Stomach (tissue), 19 donors: ENCODE measurements at regions of chr12 and their contacts with region 1.

Region 1: GRCh38 chr12:54958048-54958658 is 26.4 kb downstream of the TESPA1 start:
- DNase-seq: peak; percentile 42 to 87
- H3K4me3 ChIP-seq: no peak overlapping the region
- H3K27ac ChIP-seq: no peak overlapping the region
- H3K4me1 ChIP-seq: no peaks in the 10 kb centered on the region
- H3K27me3 ChIP-seq: peaks cover 0 to 7% (median 0%) of the 10 kb centered on the region in 3 donors
- CTCF ChIP-seq: peak in 5 of 7 experiments; percentile 22 to 73 (median 60)
- EP300 ChIP-seq: no peak
- POLR2A ChIP-seq: no peak

Region 2: GRCh38 chr12:54214553-54215406 is 743.4 kb before region 1 on chr12:
- intact Hi-C with region 1: no loop called
- DNase-seq: peak; percentile 83 to 96
- H3K4me3 ChIP-seq: peak overlapping the region in 3 of 4 donors; percentile 12 to 32 (median 25)
- H3K27ac ChIP-seq: no peak overlapping the region
- H3K4me1 ChIP-seq: peaks cover 16 to 42% (median 36%) of the 10 kb centered on the region in 4 donors
- H3K27me3 ChIP-seq: peaks cover 17 to 95% (median 60%) of the 10 kb centered on the region in 3 donors
- CTCF ChIP-seq: peak in 6 of 7 experiments; percentile 6 to 94 (median 90)
- EP300 ChIP-seq: no peak
- POLR2A ChIP-seq: no peak

Region 3: DNA sequence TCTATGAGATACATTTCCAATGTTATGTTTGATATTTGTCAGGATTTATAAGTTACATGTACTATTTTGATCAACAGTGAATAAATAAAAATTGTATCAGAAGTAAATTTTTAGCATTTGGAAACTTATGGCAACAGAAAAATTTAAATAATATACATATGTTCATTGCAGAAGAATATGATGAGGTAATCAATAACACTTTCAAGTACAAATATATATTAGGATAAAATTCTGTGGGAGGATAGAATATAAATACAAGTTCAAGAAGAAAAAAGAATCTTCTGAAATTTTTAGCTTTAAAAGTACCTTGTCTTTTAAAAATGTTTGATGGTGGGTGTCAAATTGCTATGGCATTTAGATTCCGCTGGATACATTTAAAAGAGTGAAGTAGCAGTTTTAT is 206.7 kb before region 1 on chr12:
- intact Hi-C with region 1: loop called (anchors 5 kb)
- DNase-seq: no peak
- H3K4me3 ChIP-seq: no peak overlapping the region
- H3K27ac ChIP-seq: no peak overlapping the region
- H3K4me1 ChIP-seq: no peaks in the 10 kb centered on the region
- H3K27me3 ChIP-seq: no peaks in the 10 kb centered on the region
- CTCF ChIP-seq: no peak
- EP300 ChIP-seq: no peak
- POLR2A ChIP-seq: no peak

Region 4: GRCh38 chr12:54865683-54866324 is 92.3 kb before region 1 on chr12:
- intact Hi-C with region 1: loop called (anchors 10 kb)
- DNase-seq: no peak
- H3K4me3 ChIP-seq: no peak overlapping the region
- H3K27ac ChIP-seq: no peak overlapping the region
- H3K4me1 ChIP-seq: no peaks in the 10 kb centered on the region
- H3K27me3 ChIP-seq: no peaks in the 10 kb centered on the region
- CTCF ChIP-seq: no peak
- EP300 ChIP-seq: no peak
- POLR2A ChIP-seq: no peak